ENCODE measurements at regions of chr15 and their contacts with region 1.

Region 1: DNA sequence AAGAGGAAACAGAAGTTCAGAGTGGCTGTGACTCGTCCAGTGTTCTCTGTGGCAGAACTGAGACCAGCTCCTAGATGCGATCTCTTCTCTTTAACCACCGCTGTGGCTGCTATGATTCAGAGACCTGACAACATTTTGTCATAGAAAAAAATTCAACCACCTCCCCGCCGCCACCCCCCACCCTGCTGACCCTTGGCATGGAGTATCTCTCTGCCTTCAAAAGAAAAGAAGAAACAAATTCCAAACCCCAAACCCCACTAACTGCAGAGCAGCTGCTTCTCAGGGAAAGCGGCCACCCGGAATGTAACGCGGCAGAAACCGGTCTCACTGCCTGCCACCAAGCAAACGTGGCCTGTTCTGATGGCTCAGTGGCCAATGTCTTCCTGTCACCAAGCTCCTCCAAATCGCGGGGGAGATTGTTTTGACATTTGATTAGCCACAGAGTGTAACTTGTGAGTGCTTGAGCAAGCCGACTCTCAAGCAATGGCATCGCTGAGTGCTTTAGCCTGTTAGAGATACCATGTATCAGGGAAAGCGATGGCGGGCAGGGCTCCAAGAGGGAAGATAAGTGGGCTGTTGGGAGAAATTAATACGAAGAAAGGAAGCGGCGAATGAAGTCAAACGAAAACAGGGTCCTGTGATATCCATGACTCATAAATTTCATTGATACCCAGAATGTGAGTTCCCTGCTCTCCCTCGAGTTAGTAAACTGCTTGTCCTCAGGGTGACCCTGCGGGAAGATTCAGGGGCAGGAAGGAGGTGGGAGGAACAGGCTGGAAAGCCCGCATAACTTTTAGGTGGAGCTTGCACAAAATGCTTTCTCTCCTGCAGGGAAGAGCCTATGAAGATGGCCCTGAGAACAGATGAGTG is 44.8 kb upstream of the TLE3 start:
- DNase-seq: no peak
- ATAC-seq: peak; percentile 87

Region 2: DNA sequence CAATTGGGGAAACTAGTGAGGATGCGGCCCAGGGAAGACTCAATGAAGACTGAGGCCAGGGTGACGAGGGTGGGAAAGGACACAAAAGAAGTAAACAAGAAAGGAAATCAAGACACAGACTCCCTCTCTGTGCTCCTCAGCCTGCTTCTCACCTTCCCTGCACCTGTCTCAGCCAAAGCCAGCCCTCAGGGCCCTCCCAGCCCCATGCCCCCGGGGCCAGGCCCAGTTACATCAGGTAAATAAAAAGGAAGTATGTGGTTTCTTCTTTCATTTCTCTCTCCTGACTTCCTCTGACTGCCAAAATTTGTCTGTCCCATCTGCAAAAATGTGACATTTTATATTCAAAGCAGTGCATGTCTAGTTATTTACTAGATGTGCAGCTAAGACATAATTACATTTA is 292.8 kb after region 1 on chr15:
- intact Hi-C with region 1: loop called (anchors 1 kb)
- DNase-seq: no peak
- ATAC-seq: no peak